Heart left ventricle (tissue), 16 donors: ENCODE measurements at regions of chr11 and their contacts with region 1.

Region 1: DNA sequence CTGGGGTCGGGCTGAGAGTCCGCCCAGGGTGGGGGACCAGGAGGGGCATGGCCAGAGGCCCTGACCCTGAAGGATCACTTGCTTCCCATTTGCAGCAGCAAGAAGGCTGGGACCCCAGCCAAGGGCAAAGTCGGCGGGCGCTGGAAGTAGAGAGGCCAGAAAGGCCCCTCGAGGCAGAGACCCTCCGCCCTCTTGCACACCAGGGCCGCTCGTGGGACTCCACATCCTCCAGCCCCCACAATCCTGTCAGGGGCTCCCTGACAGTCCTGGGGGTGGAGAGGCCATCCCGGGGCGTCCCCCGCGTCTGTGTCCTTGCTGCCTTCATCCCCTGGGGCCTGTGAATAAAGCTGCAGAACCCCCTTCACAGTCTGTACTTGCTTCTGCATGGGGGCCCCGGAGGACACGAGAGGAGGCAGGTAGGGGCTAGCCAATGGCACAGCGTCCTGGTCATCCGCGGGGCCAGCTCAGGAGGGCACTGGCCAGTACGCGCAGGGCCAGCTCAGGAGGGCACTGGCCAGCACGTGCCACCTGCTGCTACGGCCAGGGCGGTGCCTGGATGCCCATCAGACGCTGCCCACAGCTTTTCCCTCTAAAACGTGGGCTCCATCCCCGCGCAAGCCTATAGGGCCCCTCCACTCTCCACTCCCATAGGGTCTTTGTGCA is 8.7 kb upstream of the MRPL23 start:
- DNase-seq: peak in 4 of 5 donors; percentile 7 to 47 (median 20)
- ATAC-seq: peak in 1 of 4 donors; percentile 6
- H3K4me3 ChIP-seq: no peak overlapping the region
- H3K27ac ChIP-seq: peak overlapping the region in 11 of 12 donors; percentile 24 to 79 (median 74)
- H3K4me1 ChIP-seq: peaks cover 0 to 19% (median 9%) of the 10 kb centered on the region in 12 donors
- H3K27me3 ChIP-seq: no peaks in the 10 kb centered on the region
- CTCF ChIP-seq: no peak
- POLR2A ChIP-seq: no peak

Region 2: DNA sequence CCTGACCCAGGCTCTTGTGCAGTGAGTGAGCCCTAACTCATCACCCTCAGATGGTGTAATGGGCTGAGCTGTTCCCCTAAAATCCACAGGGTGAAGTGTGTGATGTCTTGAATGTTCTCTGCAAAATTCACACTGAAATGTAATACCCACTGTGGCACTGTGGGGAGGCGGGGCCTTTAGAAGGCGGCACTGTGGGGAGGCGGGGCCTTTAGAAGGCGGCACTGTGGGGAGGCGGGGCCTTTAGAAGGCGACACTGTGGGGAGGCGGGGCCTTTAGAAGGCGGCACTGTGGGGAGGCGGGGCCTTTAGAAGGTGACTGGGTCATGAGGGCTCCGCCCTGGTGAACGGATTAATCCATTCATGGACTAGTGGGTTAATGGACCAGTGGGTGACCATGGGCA is 1060.9 kb before region 1 on chr11:
- intact Hi-C with region 1: no loop called
- DNase-seq: no peak
- ATAC-seq: no peak
- H3K4me3 ChIP-seq: no peak overlapping the region
- H3K27ac ChIP-seq: no peak overlapping the region
- H3K4me1 ChIP-seq: peaks cover 0 to 12% (median 0%) of the 10 kb centered on the region in 12 donors
- H3K27me3 ChIP-seq: no peaks in the 10 kb centered on the region
- CTCF ChIP-seq: no peak
- POLR2A ChIP-seq: no peak

Region 3: GRCh38 chr11:1876361-1877063 is 62.0 kb before region 1 on chr11:
- intact Hi-C with region 1: no loop called
- DNase-seq: peak; percentile 82 to 87 (median 85)
- ATAC-seq: peak in 3 of 4 donors; percentile 16 to 38 (median 32)
- H3K4me3 ChIP-seq: peak overlapping the region in 9 of 12 donors; percentile 13 to 43 (median 23)
- H3K27ac ChIP-seq: peak overlapping the region; percentile 69 to 99 (median 96)
- H3K4me1 ChIP-seq: peaks cover 24 to 67% (median 52%) of the 10 kb centered on the region in 12 donors
- H3K27me3 ChIP-seq: no peaks in the 10 kb centered on the region
- CTCF ChIP-seq: peak; percentile 50 to 70 (median 56)
- POLR2A ChIP-seq: no peak

Region 4: DNA sequence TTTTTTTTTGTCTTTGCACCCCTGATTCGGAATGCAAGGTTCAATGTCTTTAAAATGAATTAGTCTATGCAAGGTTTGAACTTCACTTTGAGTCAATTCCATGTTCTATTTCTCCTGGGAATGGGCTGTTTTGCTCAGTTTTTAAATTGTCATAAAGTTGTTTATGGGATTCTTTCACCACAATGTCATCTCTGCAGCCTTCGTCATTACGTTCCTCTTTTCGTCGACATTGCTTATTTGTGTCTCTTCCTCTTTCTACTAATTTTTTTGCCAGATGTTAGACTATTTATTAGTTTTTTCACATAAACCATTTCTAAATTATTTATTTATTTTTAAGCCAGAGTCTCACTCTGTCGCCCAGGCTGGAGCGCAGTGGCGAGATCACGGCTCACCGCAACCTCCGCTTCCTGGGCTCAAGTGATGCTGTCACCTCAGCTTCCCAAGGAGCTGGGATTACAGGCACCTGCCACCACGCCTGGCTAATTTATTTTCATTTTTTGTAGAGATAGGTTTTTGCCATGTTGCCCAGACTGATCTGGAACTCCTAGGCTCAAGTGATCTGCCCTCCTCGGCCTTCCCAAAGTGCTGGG is 26.1 kb before region 1 on chr11:
- intact Hi-C with region 1: loop called in 7 of 10 experiments (anchors 1 kb)
- DNase-seq: peak in 3 of 5 donors; percentile 13 to 48 (median 29)
- ATAC-seq: no peak
- H3K4me3 ChIP-seq: no peak overlapping the region
- H3K27ac ChIP-seq: peak overlapping the region in 10 of 12 donors; percentile 21 to 88 (median 64)
- H3K4me1 ChIP-seq: peaks cover 1 to 48% (median 26%) of the 10 kb centered on the region in 12 donors
- H3K27me3 ChIP-seq: no peaks in the 10 kb centered on the region
- CTCF ChIP-seq: no peak
- POLR2A ChIP-seq: no peak